ENCODE measurements at regions of chr3 and their contacts with region 1.

Region 1: GRCh38 chr3:5122030-5122740 is at the start of gene ARL8B:
- DNase-seq: peak; percentile 95
- H3K4me3 Mint-ChIP-seq: peak within 1 kb of the TSS; percentile 85
- H3K27ac Mint-ChIP-seq: peak within 1 kb of the TSS; percentile 92
- H3K4me1 Mint-ChIP-seq: peaks cover 41% of the 10 kb centered on the region
- H3K27me3 Mint-ChIP-seq: no peaks in the 10 kb centered on the region
- total RNA-seq, gene ARL8B: 55.4 to 58.5 TPM

Region 2: GRCh38 chr3:3179407-3180094 is 1942.6 kb before region 1 on chr3 and contains the start of gene CRBN:
- CTCF ChIA-PET with region 1: no interaction called
- POLR2A ChIA-PET with region 1: no interaction called
- intact Hi-C with region 1: loop called (anchors 5 kb)
- DNase-seq: peak; percentile 92
- H3K4me3 Mint-ChIP-seq: peak within 1 kb of the TSS; percentile 91
- H3K27ac Mint-ChIP-seq: peak within 1 kb of the TSS; percentile 88
- H3K4me1 Mint-ChIP-seq: peaks cover 49% of the 10 kb centered on the region
- H3K27me3 Mint-ChIP-seq: no peaks in the 10 kb centered on the region
- total RNA-seq, gene CRBN: 40.4 to 45.4 TPM

Region 3: GRCh38 chr3:4406746-4407568 is 715.2 kb before region 1 on chr3:
- CTCF ChIA-PET with region 1: interaction called, 3 read pairs
- POLR2A ChIA-PET with region 1: no interaction called
- intact Hi-C with region 1: loop called (anchors 1 kb)
- DNase-seq: no peak
- H3K4me3 Mint-ChIP-seq: no peak overlapping the region
- H3K27ac Mint-ChIP-seq: no peak overlapping the region
- H3K4me1 Mint-ChIP-seq: peaks cover 47% of the 10 kb centered on the region
- H3K27me3 Mint-ChIP-seq: no peaks in the 10 kb centered on the region

Region 4: DNA sequence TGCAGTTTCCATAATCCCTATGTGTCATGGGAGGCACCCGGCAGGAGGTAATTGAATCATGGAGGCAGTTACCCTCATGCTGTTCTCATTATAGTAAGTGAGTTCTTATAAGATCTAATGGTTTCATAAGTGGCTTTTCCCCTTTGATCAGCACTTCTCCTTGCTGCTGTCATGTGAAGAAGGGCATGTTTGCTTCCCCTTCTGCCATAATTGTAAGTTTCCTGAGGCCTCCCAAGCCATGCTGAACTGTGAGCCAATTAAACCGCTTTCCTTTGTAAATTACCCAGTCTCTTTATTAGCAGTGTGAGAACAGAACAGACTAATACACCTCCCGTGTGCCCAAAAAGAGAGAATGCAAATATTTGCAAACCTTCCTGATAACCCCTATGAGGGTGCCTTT is 74.4 kb before region 1 on chr3:
- CTCF ChIA-PET with region 1: no interaction called
- POLR2A ChIA-PET with region 1: no interaction called
- intact Hi-C with region 1: no loop called
- DNase-seq: no peak
- H3K4me3 Mint-ChIP-seq: no peak overlapping the region
- H3K27ac Mint-ChIP-seq: no peak overlapping the region
- H3K4me1 Mint-ChIP-seq: peaks cover 16% of the 10 kb centered on the region
- H3K27me3 Mint-ChIP-seq: no peaks in the 10 kb centered on the region

Region 5: DNA sequence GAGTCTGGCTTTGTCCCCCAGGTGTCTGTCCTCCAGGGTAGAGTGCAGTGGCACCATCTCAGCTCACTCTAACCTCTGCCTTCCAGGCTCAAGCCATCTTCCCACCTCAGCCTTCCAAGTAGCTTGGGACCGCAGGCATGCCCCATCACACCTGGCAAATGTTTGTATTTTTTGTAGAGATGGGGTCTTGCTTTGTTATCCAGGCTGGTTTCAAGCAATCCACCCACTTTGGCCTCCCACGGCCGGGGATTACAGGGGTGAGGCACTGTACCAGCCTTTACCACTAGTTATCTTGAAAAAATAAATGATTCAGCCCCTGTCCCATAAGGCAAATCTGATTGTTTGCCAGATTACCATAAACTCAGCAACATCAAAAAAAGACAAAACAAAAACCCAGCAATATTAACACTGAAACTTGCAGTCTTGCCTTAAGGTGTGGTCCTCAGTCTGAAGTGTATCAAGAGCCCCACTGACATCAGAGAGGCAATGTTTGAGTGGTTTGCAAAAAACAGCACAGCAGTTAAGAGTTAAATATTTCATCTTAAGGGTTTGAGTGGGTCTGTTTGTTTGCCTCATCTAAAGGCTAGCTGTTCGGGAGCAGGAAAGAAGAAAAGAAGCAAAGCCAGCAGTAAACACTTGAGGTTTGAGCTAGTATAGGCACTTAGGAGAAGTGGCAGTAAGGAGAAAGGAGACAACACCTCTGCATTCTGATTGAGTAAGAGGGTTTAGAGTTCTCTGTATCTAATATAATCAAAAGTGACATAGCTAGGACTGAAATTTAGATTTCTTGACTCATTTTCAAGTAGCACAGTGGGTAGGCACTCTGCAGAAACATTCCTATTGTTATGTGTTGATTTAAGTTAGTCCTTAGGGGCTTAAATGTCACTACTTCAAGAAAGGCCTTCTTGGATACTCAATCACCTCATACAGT is 39.0 kb after region 1 on chr3:
- CTCF ChIA-PET with region 1: interaction called, 6 read pairs
- POLR2A ChIA-PET with region 1: interaction called, 3 read pairs
- intact Hi-C with region 1: loop called (anchors 1 kb)
- DNase-seq: peak; percentile 61
- H3K4me3 Mint-ChIP-seq: no peak overlapping the region
- H3K27ac Mint-ChIP-seq: peak overlapping the region; percentile 78
- H3K4me1 Mint-ChIP-seq: peaks cover 71% of the 10 kb centered on the region
- H3K27me3 Mint-ChIP-seq: no peaks in the 10 kb centered on the region

Region 6: DNA sequence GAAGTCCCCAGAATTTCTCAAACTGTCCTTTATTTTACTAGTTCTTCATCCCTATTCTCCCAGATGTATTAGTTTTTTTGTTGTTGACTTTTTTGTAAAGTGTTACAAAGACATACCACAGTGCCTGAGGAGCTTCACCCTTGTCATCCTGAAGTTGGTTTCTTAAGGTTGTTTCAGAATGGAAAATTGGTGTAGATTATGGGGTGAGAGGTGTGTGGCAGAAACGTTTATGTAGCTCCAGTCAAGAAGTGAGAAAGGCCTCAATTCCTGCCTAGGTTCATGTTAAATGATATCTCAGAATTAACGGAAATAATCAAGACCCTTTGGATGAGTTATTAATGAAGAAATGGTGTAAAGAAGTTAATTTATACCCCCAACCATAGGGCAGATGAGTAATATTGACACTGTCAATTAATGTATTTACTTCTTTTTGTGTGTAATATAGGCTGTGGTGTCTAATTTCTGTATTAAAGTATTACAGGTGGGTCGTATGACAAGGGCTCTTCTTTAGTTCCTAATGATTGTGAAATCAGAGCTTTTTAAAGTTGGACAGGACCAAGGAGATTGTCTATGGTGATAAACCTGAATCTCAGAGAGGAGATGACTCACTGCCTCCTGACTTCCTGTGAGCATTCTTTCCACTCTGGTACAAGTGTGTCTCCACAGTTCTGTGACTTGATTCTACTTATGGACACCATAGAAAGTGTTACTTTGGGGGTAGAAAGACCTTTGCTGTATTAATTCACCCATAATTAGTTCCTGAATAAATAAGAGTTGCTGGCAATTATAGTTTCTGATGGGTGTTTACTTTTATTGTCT is 72.4 kb after region 1 on chr3:
- CTCF ChIA-PET with region 1: interaction called, 18 read pairs
- POLR2A ChIA-PET with region 1: interaction called, 119 read pairs
- intact Hi-C with region 1: loop called (anchors 1 kb)
- DNase-seq: peak; percentile 62
- H3K4me3 Mint-ChIP-seq: peak overlapping the region; percentile 66
- H3K27ac Mint-ChIP-seq: peak overlapping the region; percentile 98
- H3K4me1 Mint-ChIP-seq: peaks cover 85% of the 10 kb centered on the region
- H3K27me3 Mint-ChIP-seq: no peaks in the 10 kb centered on the region

Measured in activated CD4-positive, alpha-beta memory T cell treated with anti-CD3 and anti-CD28 coated beads for 36 hours (primary cell).